ENCODE measurements at regions of chr6 and their contacts with region 1.

Region 1: GRCh38 chr6:159042003-159042825 is 2.6 kb downstream of the TAGAP start:
- DNase-seq: peak; percentile 56 to 93 (median 86)
- H3K4me3 ChIP-seq: peak overlapping the region; percentile 89
- H3K4me3 Mint-ChIP-seq: peak overlapping the region; percentile 99 to 100 (median 100)
- H3K27ac ChIP-seq: peak overlapping the region; percentile 95
- H3K27ac Mint-ChIP-seq: peak overlapping the region; percentile 90 to 100 (median 98)
- H3K4me1 ChIP-seq: peaks cover 60% of the 10 kb centered on the region
- H3K4me1 Mint-ChIP-seq: peaks cover 60 to 72% (median 69%) of the 10 kb centered on the region in 3 donors
- H3K27me3 ChIP-seq: no peaks in the 10 kb centered on the region
- H3K27me3 Mint-ChIP-seq: peaks cover 0 to 3% of the 10 kb centered on the region in 2 donors

Region 2: DNA sequence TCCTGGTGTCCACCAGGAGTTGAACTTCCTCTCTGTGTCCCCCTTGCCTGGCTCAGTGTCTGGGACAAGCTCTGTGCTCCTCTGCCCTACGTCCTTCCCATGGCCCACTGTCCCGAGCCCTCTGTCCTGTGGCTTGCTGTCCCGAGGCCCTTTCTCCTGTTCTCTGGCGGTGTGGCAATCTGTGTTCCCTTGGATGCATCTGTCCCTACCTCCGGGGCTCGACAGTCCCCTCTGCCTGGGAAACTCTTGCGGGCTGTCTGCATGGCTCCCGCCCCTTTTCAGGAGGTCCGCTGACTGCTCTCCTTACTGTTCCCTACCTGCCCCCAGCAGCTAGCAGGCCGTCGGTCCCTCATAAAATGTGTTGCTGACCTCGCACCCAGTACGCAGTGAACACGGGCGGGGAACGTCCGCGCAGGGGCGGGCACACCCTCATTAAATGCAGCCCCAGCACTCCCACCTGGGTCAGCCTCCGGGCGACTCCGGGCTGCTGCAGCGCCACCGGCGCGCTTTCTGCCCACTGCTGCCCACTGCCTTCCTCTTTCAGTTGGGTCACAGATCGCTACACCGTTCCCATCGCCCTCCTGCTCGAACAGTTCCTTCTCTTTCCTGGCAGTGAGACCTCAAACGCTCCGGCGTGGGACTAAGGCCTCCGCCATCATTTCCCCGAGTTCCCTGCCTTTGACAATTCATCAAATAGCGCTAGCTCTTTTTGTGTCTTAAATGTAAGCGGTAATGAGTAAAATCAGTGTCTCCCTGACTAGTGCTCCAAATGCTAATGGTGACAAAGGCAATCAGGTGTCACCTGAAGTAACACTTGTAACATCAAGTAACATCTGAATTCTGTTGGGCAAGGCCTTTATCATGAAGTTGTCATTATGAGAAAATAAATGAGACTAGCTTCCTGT is 102.7 kb before region 1 on chr6:
- CTCF ChIA-PET with region 1: no interaction called
- POLR2A ChIA-PET with region 1: interaction called, 12 read pairs
- DNase-seq: peak in 1 of 5 donors; percentile 7
- H3K4me3 ChIP-seq: peak overlapping the region; percentile 20
- H3K4me3 Mint-ChIP-seq: peak overlapping the region; percentile 17 to 84 (median 71)
- H3K27ac ChIP-seq: no peak overlapping the region
- H3K27ac Mint-ChIP-seq: peak overlapping the region in 4 of 8 donors; percentile 22 to 91 (median 67)
- H3K4me1 ChIP-seq: peaks cover 6% of the 10 kb centered on the region
- H3K4me1 Mint-ChIP-seq: peaks cover 6 to 15% (median 8%) of the 10 kb centered on the region in 3 donors
- H3K27me3 ChIP-seq: no peaks in the 10 kb centered on the region
- H3K27me3 Mint-ChIP-seq: peaks cover 4 to 7% of the 10 kb centered on the region in 2 donors

Region 3: DNA sequence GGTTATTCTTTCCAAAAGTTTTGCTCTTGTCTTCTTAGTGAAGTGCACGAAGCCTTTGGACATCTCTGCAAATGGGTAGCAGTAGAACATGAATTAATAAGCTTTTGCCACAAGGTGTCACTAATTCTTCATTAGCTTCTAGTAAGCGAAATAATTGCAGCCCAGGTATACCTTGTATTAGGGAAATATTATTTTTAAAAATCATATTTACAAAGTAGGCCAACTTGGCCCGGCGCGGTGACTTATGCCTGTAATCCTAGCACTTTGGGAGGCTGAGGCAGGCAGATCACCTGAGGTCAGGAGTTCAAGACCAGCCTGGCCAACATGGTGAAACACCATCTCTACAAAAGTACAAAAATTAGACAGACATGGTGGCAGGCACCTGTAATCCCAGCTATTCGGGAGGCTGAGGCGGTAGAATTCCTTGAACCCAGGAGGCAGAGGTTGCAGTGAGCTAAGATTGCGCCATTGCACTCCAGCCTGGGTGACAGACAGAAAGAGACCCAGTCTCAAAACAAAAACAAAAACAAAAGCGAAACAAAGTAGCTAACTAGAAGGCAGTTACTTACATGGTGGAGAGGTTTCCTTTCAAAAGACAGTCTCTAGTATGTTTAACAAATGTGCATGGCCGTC is 33.4 kb before region 1 on chr6:
- CTCF ChIA-PET with region 1: interaction called, 100 read pairs
- POLR2A ChIA-PET with region 1: interaction called, 16 read pairs
- DNase-seq: peak in 3 of 5 donors; percentile 48 to 53 (median 48)
- H3K4me3 ChIP-seq: peak overlapping the region; percentile 44
- H3K4me3 Mint-ChIP-seq: peak overlapping the region; percentile 47 to 92 (median 81)
- H3K27ac ChIP-seq: no peak overlapping the region
- H3K27ac Mint-ChIP-seq: peak overlapping the region; percentile 49 to 92 (median 84)
- H3K4me1 ChIP-seq: peaks cover 20% of the 10 kb centered on the region
- H3K4me1 Mint-ChIP-seq: peaks cover 35 to 50% (median 50%) of the 10 kb centered on the region in 3 donors
- H3K27me3 ChIP-seq: no peaks in the 10 kb centered on the region
- H3K27me3 Mint-ChIP-seq: no peaks in the 10 kb centered on the region

Region 4: DNA sequence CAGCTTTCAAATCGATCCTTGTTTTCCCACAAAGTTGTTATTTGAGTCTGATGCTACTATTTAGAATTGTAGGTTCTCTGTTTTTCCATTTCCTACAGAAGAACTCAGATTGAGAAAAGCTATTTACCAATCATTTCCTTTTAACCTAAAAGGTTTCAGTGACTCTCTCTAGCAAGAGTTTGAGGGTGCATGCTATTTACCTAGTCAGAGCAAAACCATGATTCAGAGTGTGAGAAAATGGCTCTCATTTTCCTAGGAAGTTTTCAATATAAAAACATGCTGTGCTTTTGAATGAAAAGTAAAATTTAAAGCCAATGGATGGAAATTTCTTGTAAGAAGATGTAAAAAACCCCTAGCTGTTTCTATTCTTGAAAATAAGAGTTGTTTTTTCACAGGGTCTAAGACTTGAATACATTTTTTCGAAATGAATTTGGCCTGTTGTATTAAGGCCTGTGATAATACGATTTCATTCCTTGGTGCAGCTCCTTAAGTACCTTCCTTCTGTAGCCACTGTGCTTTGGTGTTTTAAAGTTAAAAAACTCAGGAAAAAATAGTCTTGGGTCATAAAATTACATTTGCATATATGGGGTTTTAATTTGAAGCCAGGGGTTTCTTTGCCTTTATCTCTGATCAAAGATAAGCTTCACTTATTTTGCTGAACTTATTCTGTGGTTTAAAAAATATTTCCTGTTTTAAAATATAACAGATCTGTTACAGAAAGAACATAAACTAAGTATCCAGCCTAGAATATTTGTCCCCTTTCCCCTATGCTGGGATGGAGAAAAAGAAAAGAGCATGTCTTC is 24.3 kb before region 1 on chr6:
- CTCF ChIA-PET with region 1: interaction called, 100 read pairs
- POLR2A ChIA-PET with region 1: interaction called, 8 read pairs
- DNase-seq: no peak
- H3K4me3 ChIP-seq: no peak overlapping the region
- H3K4me3 Mint-ChIP-seq: peak overlapping the region in 6 of 7 donors; percentile 20 to 69 (median 38)
- H3K27ac ChIP-seq: no peak overlapping the region
- H3K27ac Mint-ChIP-seq: peak overlapping the region; percentile 23 to 91 (median 70)
- H3K4me1 ChIP-seq: peaks cover 39% of the 10 kb centered on the region
- H3K4me1 Mint-ChIP-seq: peaks cover 48 to 67% (median 58%) of the 10 kb centered on the region in 3 donors
- H3K27me3 ChIP-seq: no peaks in the 10 kb centered on the region
- H3K27me3 Mint-ChIP-seq: no peaks in the 10 kb centered on the region

Region 5: DNA sequence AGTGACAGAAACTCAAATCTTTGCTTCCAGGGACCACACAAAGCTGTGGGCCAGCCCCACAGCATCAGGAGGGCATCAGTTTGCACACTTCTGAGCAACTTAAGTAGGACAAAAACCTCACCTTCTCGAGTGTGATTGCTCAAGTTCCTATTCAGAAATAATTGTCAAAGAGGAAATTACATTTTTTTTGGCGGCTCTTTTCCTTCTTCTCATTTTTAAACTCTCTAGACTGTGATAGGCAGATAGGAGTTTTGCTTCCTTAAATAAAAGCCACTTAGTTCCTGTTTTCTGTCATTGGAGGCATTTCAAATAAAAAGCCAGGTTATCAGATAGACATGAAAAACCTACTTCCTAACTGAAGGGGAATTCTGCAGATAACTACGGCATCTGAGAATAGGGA is 13.8 kb after region 1 on chr6:
- CTCF ChIA-PET with region 1: interaction called, 16 read pairs
- POLR2A ChIA-PET with region 1: interaction called, 20 read pairs
- DNase-seq: no peak
- H3K4me3 ChIP-seq: peak overlapping the region; percentile 24
- H3K4me3 Mint-ChIP-seq: peak overlapping the region; percentile 12 to 73 (median 61)
- H3K27ac ChIP-seq: no peak overlapping the region
- H3K27ac Mint-ChIP-seq: peak overlapping the region; percentile 74 to 93 (median 82)
- H3K4me1 ChIP-seq: peaks cover 68% of the 10 kb centered on the region
- H3K4me1 Mint-ChIP-seq: peaks cover 68 to 86% (median 84%) of the 10 kb centered on the region in 3 donors
- H3K27me3 ChIP-seq: no peaks in the 10 kb centered on the region
- H3K27me3 Mint-ChIP-seq: no peaks in the 10 kb centered on the region

Region 6: GRCh38 chr6:159062564-159062945 is 20.3 kb after region 1 on chr6:
- CTCF ChIA-PET with region 1: interaction called, 65 read pairs
- POLR2A ChIA-PET with region 1: interaction called, 48 read pairs
- DNase-seq: peak; percentile 25 to 83 (median 80)
- H3K4me3 ChIP-seq: peak overlapping the region; percentile 3
- H3K4me3 Mint-ChIP-seq: peak overlapping the region; percentile 43 to 89 (median 75)
- H3K27ac ChIP-seq: peak overlapping the region; percentile 70
- H3K27ac Mint-ChIP-seq: peak overlapping the region; percentile 94 to 99 (median 98)
- H3K4me1 ChIP-seq: peaks cover 69% of the 10 kb centered on the region
- H3K4me1 Mint-ChIP-seq: peaks cover 85 to 98% (median 97%) of the 10 kb centered on the region in 3 donors
- H3K27me3 ChIP-seq: no peaks in the 10 kb centered on the region
- H3K27me3 Mint-ChIP-seq: no peaks in the 10 kb centered on the region

Region 7: GRCh38 chr6:159134701-159135364 is 92.6 kb after region 1 on chr6:
- CTCF ChIA-PET with region 1: interaction called, 17 read pairs
- POLR2A ChIA-PET with region 1: interaction called, 3 read pairs
- DNase-seq: peak; percentile 57 to 77 (median 67)
- H3K4me3 ChIP-seq: no peak overlapping the region
- H3K4me3 Mint-ChIP-seq: no peak overlapping the region
- H3K27ac ChIP-seq: no peak overlapping the region
- H3K27ac Mint-ChIP-seq: no peak overlapping the region
- H3K4me1 ChIP-seq: no peaks in the 10 kb centered on the region
- H3K4me1 Mint-ChIP-seq: peaks cover 0 to 8% (median 6%) of the 10 kb centered on the region in 3 donors
- H3K27me3 ChIP-seq: no peaks in the 10 kb centered on the region
- H3K27me3 Mint-ChIP-seq: peaks cover 15 to 21% of the 10 kb centered on the region in 2 donors

Region 8: DNA sequence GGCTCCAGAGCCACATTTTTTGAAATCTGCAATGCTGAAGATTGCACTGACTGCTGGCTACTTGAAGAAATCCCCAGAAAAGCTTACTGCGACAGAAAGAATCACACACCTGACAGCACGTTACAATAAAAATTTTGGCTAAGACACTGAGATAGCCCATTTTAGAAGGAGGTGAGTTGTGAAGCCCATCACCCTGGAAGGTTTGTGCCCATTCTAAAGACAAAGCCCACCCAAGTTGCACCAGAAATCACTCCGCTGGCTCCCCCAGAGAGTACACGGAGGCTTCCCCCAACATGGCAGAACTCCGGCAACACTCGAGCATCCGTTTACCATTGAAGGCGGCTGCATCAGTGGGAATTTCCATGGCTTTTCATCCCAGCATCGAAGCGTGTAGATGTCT is 1592.5 kb after region 1 on chr6:
- CTCF ChIA-PET with region 1: no interaction called
- POLR2A ChIA-PET with region 1: no interaction called
- DNase-seq: peak in 1 of 5 donors; percentile 1
- H3K4me3 ChIP-seq: no peak overlapping the region
- H3K4me3 Mint-ChIP-seq: no peak overlapping the region
- H3K27ac ChIP-seq: no peak overlapping the region
- H3K27ac Mint-ChIP-seq: no peak overlapping the region
- H3K4me1 ChIP-seq: no peaks in the 10 kb centered on the region
- H3K4me1 Mint-ChIP-seq: no peaks in the 10 kb centered on the region
- H3K27me3 ChIP-seq: no peaks in the 10 kb centered on the region
- H3K27me3 Mint-ChIP-seq: peaks cover 0 to 4% of the 10 kb centered on the region in 2 donors